Ascending aorta (tissue), 2 donors: ENCODE measurements at regions of chr14 and their contacts with region 1.

Region 1: GRCh38 chr14:76918751-76919543 is 92.7 kb downstream of the LRRC74A start:
- DNase-seq: peak; percentile 91 to 99
- H3K4me3 ChIP-seq: peak overlapping the region in 1 of 2 donors; percentile 22
- H3K27ac ChIP-seq: peak overlapping the region; percentile 85 to 86
- H3K4me1 ChIP-seq: peaks cover 23 to 39% of the 10 kb centered on the region in 2 donors
- H3K27me3 ChIP-seq: no peaks in the 10 kb centered on the region
- CTCF ChIP-seq: peak in 1 of 3 experiments; percentile 24

Region 2: DNA sequence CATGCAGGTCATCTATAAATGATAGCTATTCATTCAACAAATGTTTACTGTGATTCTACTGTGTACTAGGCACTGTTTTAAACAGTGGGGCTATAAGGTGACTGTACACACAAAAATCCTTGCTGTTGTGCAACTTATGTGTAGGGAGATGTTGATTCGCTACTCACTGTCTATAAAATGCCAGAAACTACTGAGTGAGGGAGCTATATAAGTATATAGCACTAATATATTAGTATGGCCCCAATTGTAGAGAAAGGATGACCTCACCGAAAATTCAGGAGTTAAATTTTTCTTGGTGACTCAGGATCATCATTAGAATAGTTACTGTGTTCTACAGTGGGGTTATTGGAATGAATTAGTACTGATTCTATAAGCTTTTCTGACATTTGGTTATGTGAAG is 1054.6 kb before region 1 on chr14:
- intact Hi-C with region 1: no loop called
- DNase-seq: no peak
- H3K4me3 ChIP-seq: no peak overlapping the region
- H3K27ac ChIP-seq: no peak overlapping the region
- H3K4me1 ChIP-seq: peaks cover 7 to 16% of the 10 kb centered on the region in 2 donors
- H3K27me3 ChIP-seq: no peaks in the 10 kb centered on the region
- CTCF ChIP-seq: no peak

Region 3: GRCh38 chr14:76844223-76844622 is 74.7 kb before region 1 on chr14:
- intact Hi-C with region 1: no loop called
- DNase-seq: peak; percentile 49 to 73
- H3K4me3 ChIP-seq: no peak overlapping the region
- H3K27ac ChIP-seq: no peak overlapping the region
- H3K4me1 ChIP-seq: no peaks in the 10 kb centered on the region
- H3K27me3 ChIP-seq: no peaks in the 10 kb centered on the region
- CTCF ChIP-seq: peak in 1 of 3 experiments; percentile 21

Region 4: DNA sequence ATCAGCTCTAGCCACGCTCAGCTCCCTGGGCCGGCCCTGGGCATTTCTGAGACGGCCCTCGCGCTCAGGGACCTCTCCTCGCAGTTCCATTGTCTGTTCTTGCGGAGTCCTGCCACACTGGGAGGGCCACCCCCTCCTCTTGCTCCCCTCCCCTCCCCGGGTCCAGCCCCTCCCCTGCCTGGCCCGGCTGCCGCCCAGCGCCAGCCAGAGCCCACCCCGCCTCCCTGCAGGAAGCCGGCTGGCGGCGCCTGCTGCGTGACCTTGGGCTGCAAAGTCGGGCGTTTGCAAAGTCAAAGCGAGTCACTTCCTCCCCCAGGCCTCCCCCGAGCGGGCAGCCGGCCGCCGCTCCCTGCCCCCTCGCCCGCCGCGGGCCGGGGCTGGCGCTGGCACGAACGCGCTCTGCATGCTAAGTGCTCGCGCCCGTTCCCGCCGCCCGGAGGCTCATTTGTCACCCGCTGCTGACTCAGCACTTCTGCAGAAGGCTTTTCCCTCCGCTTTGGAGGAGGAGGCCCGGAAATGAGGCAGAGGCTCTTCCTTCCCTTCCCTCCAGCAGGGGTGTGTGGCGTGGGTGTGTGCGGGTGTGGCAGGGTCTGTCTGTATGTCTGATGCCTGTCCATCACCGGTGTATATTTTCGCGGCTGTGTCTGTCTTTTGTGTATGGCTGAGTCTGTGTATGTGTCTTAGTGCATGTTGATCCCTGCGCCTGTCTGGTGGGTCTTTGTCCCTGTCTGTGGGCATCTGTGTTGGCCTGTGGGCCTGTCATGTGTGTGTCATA is 37.6 kb after region 1 on chr14:
- intact Hi-C with region 1: loop called (anchors 2 kb)
- DNase-seq: peak; percentile 82 to 97
- H3K4me3 ChIP-seq: peak overlapping the region; percentile 45 to 59
- H3K27ac ChIP-seq: peak overlapping the region; percentile 94 to 97
- H3K4me1 ChIP-seq: peaks cover 12 to 56% of the 10 kb centered on the region in 2 donors
- H3K27me3 ChIP-seq: no peaks in the 10 kb centered on the region
- CTCF ChIP-seq: no peak

Region 5: GRCh38 chr14:77007975-77008421 is 89.1 kb after region 1 on chr14:
- intact Hi-C with region 1: loop called (anchors 2 kb)
- DNase-seq: peak; percentile 47 to 91
- H3K4me3 ChIP-seq: no peak overlapping the region
- H3K27ac ChIP-seq: peak overlapping the region; percentile 69 to 80
- H3K4me1 ChIP-seq: peaks cover 18 to 37% of the 10 kb centered on the region in 2 donors
- H3K27me3 ChIP-seq: no peaks in the 10 kb centered on the region
- CTCF ChIP-seq: no peak

Region 6: DNA sequence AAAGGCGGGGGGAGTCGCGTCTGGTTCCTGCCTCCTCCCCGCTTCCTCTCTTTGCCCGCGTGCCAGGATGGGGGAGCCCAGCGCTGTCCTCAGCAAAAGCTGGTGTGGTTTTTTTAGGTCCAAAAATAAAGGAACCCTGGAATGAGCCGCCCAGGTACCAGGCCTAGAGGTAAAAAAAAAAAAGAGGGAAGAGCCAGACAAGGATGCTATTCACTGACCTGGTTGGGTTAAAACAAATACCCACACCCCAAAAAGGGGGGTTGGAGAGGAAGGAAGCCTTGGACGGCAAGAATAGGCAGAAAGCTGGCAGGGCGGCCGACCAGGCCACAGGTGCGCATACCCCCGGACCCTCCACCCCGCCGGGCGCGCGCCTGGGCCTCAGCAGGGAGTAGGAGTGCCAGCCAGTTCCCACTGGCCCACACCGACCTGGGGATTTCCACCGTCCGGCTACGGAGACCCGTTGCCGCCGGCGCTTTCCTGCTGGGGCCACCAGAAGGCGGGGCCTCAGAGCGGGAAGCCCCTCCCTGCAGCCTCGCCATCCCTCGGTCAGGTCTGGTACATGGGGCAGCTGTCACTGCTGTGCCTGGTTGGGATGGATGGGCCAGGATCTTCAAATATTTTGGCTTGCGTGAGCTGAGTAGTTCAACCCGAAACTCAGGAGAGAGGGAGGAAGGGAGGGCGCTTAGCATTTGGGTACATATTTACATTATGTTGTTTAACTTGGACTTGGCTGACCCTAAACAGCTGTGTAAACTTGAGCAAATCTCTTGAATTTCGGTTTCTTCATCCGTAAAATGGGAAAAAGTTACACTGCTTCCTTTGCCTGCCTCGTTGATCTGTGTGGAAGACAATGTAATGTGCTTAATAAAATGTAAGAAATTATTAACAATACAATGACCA is 114.9 kb after region 1 on chr14:
- intact Hi-C with region 1: loop called (anchors 2 kb)
- DNase-seq: peak in 1 of 2 donors; percentile 93
- H3K4me3 ChIP-seq: peak overlapping the region; percentile 67 to 72
- H3K27ac ChIP-seq: peak overlapping the region; percentile 99 to 100
- H3K4me1 ChIP-seq: peaks cover 16 to 70% of the 10 kb centered on the region in 2 donors
- H3K27me3 ChIP-seq: no peaks in the 10 kb centered on the region
- CTCF ChIP-seq: no peak